ENCODE measurements at regions of chr15 and their contacts with region 1.

Region 1: GRCh38 chr15:55649054-55649423 is 60.9 kb upstream of the PYGO1 start:
- DNase-seq: peak; percentile 80
- ATAC-seq: peak; percentile 94
- H3K4me3 ChIP-seq: no peak overlapping the region
- H3K27ac ChIP-seq: no peak overlapping the region
- H3K4me1 ChIP-seq: no peaks in the 10 kb centered on the region
- H3K27me3 ChIP-seq: no peaks in the 10 kb centered on the region
- CTCF ChIP-seq: no peak
- POLR2A ChIP-seq: no peak
- RAD21 ChIP-seq: no peak

Region 2: DNA sequence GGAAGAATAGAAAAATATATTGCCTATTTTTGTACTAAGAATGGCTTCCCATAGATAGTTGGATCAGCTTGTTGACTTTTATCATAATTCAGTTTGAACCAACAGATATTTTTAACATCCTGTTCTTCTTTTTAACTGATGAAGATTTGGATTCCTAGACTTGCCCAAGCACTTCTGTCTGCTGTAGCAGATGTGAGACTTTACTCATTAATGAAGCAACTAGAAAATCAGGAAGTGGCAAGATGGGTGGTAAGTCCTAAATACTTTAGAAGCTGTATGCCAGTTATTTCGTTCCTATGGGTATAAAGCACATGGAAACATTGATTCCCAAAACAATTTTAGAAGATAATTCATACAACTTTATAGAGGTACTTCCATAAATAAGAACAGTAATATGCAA is 321.7 kb before region 1 on chr15:
- CTCF ChIA-PET with region 1: no interaction called
- POLR2A ChIA-PET with region 1: no interaction called
- dilution Hi-C with region 1: no loop called
- in situ Hi-C with region 1: no loop called
- intact Hi-C with region 1: no loop called
- DNase-seq: no peak
- ATAC-seq: no peak
- H3K4me3 ChIP-seq: no peak overlapping the region
- H3K27ac ChIP-seq: no peak overlapping the region
- H3K4me1 ChIP-seq: no peaks in the 10 kb centered on the region
- H3K27me3 ChIP-seq: no peaks in the 10 kb centered on the region
- CTCF ChIP-seq: no peak
- POLR2A ChIP-seq: no peak
- RAD21 ChIP-seq: no peak

Region 3: GRCh38 chr15:55434989-55435825 is 213.8 kb before region 1 on chr15:
- CTCF ChIA-PET with region 1: interaction called, 8 read pairs
- POLR2A ChIA-PET with region 1: no interaction called
- dilution Hi-C with region 1: no loop called
- in situ Hi-C with region 1: no loop called
- intact Hi-C with region 1: loop called (anchors 5 kb)
- DNase-seq: peak; percentile 64
- ATAC-seq: peak; percentile 93
- H3K4me3 ChIP-seq: no peak overlapping the region
- H3K27ac ChIP-seq: no peak overlapping the region
- H3K4me1 ChIP-seq: no peaks in the 10 kb centered on the region
- H3K27me3 ChIP-seq: no peaks in the 10 kb centered on the region
- CTCF ChIP-seq: peak; percentile 70
- POLR2A ChIP-seq: no peak
- RAD21 ChIP-seq: peak; percentile 68

Region 4: GRCh38 chr15:55499151-55499550 is 149.9 kb before region 1 on chr15:
- CTCF ChIA-PET with region 1: no interaction called
- POLR2A ChIA-PET with region 1: no interaction called
- dilution Hi-C with region 1: no loop called
- in situ Hi-C with region 1: no loop called
- intact Hi-C with region 1: no loop called
- DNase-seq: no peak
- ATAC-seq: no peak
- H3K4me3 ChIP-seq: no peak overlapping the region
- H3K27ac ChIP-seq: no peak overlapping the region
- H3K4me1 ChIP-seq: no peaks in the 10 kb centered on the region
- H3K27me3 ChIP-seq: no peaks in the 10 kb centered on the region
- CTCF ChIP-seq: no peak
- POLR2A ChIP-seq: no peak
- RAD21 ChIP-seq: no peak

Region 5: DNA sequence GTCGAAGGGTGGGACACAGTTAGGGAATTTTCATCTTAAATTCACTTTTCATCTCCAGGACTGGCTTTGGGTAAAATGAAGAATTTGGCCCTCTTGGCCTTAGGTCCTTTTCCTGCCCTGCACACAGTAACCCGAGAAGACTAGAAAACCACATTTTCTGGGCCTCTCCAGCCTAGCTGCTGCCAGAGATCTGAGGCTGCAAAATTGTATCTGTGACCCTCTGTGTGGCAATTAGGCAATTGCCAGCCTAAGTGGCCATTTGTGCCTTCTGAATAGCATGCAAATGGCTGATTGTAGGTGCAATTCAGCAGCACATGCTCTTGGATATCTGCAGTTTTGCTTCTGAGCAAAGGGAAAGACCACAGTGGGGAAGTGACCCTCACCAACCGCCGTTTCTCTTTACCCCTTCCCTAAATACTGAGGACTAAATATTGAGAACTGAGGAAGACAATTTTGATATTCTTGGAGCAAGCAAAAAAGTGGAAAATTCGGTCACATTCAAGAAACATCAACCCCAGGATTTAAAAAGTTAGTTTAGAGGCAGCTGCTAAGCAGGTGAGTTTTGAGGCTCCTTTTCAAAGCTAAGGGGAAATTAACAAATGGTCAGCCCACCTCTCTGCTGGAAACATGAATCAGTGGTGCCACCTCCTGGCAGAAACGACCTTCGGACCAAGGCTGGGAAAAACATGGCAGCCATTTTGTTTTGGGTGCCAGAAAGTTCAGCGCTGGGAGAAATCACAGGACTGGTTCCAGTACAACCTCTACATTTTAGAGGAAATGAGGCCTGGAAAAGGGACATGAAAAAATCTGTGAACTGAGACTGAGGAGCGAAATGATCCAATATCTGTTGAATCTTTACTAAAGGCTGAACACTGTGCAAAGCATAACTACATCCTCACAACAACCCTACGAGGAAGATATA is 150.5 kb after region 1 on chr15:
- CTCF ChIA-PET with region 1: interaction called, 3 read pairs
- POLR2A ChIA-PET with region 1: no interaction called
- dilution Hi-C with region 1: no loop called
- in situ Hi-C with region 1: loop called (anchors 25 kb)
- intact Hi-C with region 1: loop called (anchors 1 kb)
- DNase-seq: peak; percentile 52
- ATAC-seq: peak; percentile 85
- H3K4me3 ChIP-seq: no peak overlapping the region
- H3K27ac ChIP-seq: no peak overlapping the region
- H3K4me1 ChIP-seq: peaks cover 2% of the 10 kb centered on the region; the same call in 1 of the 2 replicates
- H3K27me3 ChIP-seq: peaks cover 5% of the 10 kb centered on the region
- CTCF ChIP-seq: peak; percentile 77
- POLR2A ChIP-seq: no peak
- RAD21 ChIP-seq: peak; percentile 80

Region 6: DNA sequence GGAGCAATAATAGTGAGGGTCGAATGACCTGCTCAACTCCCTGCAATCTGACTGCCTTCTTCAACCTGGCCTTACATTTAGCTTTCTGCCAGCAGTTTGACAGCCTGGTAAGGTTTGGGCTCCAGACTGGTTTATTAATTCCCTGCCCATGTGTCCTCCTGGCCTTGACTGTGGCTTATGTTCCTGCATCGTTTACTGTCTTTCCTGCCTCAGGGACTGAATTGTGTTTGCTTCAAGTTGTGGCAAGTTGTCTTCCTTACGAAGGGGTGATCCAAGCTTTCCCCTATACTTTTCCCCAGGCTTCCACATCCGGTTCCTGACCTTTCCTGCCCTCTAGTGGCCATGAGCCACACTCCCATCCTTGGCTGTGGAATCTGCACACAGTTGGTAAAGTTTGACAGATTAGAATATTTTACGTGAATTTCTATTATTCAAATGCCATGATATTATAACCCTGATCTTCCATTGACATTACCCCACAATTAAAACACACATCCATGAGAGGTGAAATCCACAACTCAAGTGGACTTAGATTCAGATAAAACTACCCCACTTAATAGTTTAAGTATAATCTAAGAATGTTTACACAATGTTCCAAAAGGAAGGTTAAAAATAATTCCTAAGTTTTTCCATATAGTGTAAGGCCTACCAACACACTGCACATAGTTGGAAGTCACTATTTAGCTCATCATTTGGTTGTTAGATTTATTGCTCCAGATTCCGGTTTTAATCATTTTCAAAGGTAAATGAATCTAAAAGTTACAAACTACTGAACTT is 248.7 kb after region 1 on chr15:
- CTCF ChIA-PET with region 1: no interaction called
- POLR2A ChIA-PET with region 1: no interaction called
- dilution Hi-C with region 1: no loop called
- in situ Hi-C with region 1: no loop called
- intact Hi-C with region 1: loop called (anchors 2 kb)
- DNase-seq: peak; percentile 61
- ATAC-seq: peak; percentile 87
- H3K4me3 ChIP-seq: no peak overlapping the region
- H3K27ac ChIP-seq: peak overlapping the region; percentile 67
- H3K4me1 ChIP-seq: peaks cover 9% of the 10 kb centered on the region
- H3K27me3 ChIP-seq: no peaks in the 10 kb centered on the region
- CTCF ChIP-seq: peak; percentile 69
- POLR2A ChIP-seq: no peak
- RAD21 ChIP-seq: peak; percentile 52

Region 7: GRCh38 chr15:56052395-56053045 is 403.5 kb after region 1 on chr15:
- CTCF ChIA-PET with region 1: no interaction called
- POLR2A ChIA-PET with region 1: no interaction called
- dilution Hi-C with region 1: no loop called
- in situ Hi-C with region 1: loop called (anchors 10 kb)
- intact Hi-C with region 1: loop called (anchors 2 kb)
- DNase-seq: peak; percentile 68
- ATAC-seq: peak; percentile 90
- H3K4me3 ChIP-seq: no peak overlapping the region
- H3K27ac ChIP-seq: no peak overlapping the region
- H3K4me1 ChIP-seq: peaks cover 7% of the 10 kb centered on the region
- H3K27me3 ChIP-seq: no peaks in the 10 kb centered on the region
- CTCF ChIP-seq: peak; percentile 74
- POLR2A ChIP-seq: no peak
- RAD21 ChIP-seq: peak; percentile 71

Region 8: GRCh38 chr15:56428821-56429458 is 779.9 kb after region 1 on chr15:
- CTCF ChIA-PET with region 1: no interaction called
- POLR2A ChIA-PET with region 1: no interaction called
- dilution Hi-C with region 1: no loop called
- in situ Hi-C with region 1: loop called (anchors 25 kb)
- intact Hi-C with region 1: loop called (anchors 2 kb)
- DNase-seq: peak; percentile 39
- ATAC-seq: peak; percentile 71
- H3K4me3 ChIP-seq: no peak overlapping the region
- H3K27ac ChIP-seq: no peak overlapping the region
- H3K4me1 ChIP-seq: no peaks in the 10 kb centered on the region
- H3K27me3 ChIP-seq: no peaks in the 10 kb centered on the region
- CTCF ChIP-seq: peak; percentile 64
- POLR2A ChIP-seq: no peak
- RAD21 ChIP-seq: peak; percentile 56